GM10248 (cell line): ENCODE measurements at regions of chr3 and their contacts with region 1.

Region 1: DNA sequence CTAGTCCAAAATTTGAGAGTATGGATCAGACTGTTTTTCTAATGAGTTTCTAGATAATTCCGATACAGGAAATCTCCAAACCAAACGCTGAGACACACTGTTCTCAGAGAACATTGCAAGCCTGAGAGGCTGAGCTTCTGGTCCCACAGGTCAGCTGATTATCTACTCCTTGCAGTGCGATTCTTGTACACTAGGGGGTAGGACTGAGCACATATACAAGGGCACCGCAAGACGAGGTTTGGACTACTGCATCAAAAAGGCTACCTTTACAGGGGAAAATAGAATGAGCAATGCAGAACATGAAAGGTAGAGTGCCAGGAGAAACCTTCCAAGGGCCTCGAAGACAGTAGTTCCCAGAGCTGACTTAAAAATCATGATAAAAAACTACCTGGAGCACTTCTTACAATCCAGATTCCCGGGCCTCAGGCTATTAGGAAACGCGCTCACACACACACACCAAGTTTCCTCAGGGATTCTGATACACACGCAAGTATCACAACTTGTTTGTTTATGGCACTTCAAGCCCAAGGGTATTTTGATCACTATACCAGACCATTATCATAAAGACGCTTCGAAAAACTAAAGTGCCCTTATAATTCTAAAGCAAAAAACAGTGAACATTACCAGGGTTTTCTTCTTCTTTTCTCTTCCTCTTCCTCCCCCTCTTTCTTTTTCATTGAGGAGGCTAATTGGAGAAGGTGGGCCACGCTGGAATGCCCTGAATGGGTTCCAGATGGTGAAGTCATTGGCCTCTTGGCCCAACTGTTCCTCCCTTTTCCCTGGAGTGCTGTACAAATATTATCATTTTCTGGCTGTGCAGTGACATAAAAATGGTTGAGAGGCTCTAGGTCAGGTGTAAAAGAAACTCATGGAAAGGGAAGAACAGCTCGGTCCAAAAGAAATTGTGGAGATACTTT is 61.8 kb downstream of the SLC12A8 start:
- DNase-seq: peak; percentile 49
- CTCF ChIP-seq: peak; percentile 59

Region 2: DNA sequence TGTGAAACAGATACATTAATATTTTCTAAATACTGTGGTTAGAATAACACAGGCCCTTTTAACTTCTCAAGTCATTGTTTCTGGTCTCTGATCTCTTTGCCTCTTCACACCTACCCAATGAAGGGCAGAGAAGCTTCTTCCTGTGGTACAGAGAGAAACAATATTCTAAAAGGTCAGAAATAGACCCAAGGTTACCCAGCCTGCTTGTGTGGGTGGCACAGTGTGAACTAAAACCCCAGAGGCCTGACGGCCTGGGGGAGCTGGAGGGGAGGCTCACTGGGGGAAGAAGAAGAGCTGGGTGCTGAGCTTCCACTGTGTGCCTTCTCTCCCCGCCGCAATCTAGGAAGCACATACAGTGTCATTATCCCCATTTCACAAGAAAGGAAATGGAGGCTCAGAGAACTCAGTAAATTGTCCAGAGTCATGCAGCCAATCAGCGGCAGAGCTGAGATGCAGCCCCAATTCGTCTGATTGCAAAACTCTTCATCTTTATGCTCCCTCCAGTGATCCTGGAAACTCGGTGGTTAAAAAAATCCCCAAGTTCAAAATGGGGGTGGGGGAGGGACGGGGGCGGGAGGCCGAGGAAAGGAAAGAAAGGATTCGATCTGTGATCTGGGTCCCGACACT is 30.9 kb before region 1 on chr3:
- CTCF ChIA-PET with region 1: interaction called, 10 read pairs
- POLR2A ChIA-PET with region 1: no interaction called
- DNase-seq: peak; percentile 66
- CTCF ChIP-seq: no peak

Region 3: GRCh38 chr3:125165189-125165947 is 14.6 kb after region 1 on chr3:
- CTCF ChIA-PET with region 1: interaction called, 11 read pairs
- POLR2A ChIA-PET with region 1: no interaction called
- DNase-seq: peak; percentile 50
- CTCF ChIP-seq: peak; percentile 50

Region 4: DNA sequence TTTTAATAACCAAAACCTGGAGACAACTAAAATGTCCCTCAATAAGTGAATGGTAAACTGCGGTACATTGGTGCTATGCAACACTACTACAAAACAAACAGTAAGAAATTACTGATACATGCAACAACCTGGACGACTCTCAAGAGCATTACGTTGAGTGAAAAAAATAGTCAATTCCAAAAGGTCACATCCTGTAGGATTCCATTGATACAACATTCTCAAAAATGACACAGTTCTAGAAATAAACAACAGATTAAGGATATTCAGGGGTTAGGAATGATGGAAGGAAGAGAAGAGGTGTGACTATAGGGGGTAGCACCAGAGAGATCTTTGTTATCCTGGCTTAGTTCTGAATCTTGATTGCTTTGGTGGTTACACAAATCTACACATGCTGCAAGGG is 152.1 kb after region 1 on chr3:
- CTCF ChIA-PET with region 1: no interaction called
- POLR2A ChIA-PET with region 1: no interaction called
- DNase-seq: no peak
- CTCF ChIP-seq: no peak